H1 (cell line): ENCODE measurements at regions of chr9 and their contacts with region 1.

Region 1: DNA sequence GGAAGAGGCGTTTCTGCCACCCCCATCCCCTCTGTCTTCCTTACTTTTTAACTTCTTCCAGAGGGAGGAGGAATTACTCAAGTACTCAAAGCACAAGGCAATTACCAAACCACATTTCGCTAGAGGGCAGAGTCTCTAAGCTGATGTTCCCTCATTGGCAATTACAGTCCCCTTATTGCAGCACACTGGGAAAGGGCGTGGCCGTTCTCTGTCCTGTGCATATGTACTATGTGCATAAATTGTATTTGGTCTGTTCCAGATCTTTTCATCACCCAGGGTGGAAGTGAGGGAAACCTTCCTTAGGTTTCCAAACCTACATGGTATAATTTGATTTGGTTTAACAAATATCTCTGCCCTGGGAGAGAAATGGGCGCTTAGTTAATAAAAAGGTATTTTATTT is 29.8 kb upstream of the ALDOB start:
- DNase-seq: peak in 1 of 2 experiments; percentile 19
- H3K4me3 ChIP-seq: no peak overlapping the region
- H3K27ac ChIP-seq: no peak overlapping the region
- H3K4me1 ChIP-seq: peaks cover 0 to 10% (median 3%) of the 10 kb centered on the region in 4 experiments; a peak in 5 of 7 replicates
- H3K27me3 ChIP-seq: no peaks in the 10 kb centered on the region
- CTCF ChIP-seq: peak in 2 of 3 experiments; percentile 61 to 69; a peak in 3 of 4 replicates
- EP300 ChIP-seq: no peak
- POLR2A ChIP-seq: no peak
- RAD21 ChIP-seq: peak; percentile 56 to 63

Region 2: DNA sequence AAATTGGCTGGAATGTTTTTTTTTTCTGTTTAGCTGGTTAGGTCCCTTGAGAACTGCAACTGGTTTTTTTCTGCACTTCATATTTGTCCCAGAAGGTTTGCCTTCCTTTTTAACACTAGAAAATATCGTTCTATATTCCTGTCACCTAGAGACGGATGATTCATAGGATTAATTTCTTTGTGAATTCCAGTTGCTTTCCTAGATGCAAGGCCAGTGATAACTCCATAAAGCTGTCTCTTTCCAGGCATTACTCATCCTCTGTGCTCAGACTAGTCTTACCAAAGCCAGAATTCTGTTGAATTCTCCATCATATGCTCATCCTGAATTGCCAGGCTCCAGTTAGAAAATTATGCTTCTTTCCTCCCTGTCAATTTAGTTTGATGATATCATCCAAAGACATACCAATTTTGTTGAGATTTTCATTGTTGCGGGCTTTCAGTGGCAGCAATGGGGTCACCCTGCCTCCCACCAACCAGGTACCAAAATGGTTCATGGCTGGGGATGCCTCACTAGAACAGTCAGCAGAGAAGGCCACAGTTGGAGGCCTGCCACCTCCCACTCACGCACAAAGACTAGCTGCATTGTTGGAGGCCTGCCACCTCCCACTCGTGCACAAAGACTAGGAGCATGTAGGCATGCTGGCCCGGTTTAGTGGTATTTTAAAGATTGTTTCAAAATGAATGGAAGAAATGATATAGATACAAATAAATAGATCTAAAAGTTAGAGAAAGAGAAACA is 89.1 kb before region 1 on chr9:
- CTCF ChIA-PET with region 1: no interaction called
- POLR2A ChIA-PET with region 1: no interaction called
- DNase-seq: no peak
- H3K4me3 ChIP-seq: no peak overlapping the region
- H3K27ac ChIP-seq: no peak overlapping the region
- H3K4me1 ChIP-seq: no peaks in the 10 kb centered on the region; a peak in 1 of 7 replicates
- H3K27me3 ChIP-seq: no peaks in the 10 kb centered on the region
- CTCF ChIP-seq: no peak
- EP300 ChIP-seq: no peak
- POLR2A ChIP-seq: no peak
- RAD21 ChIP-seq: no peak

Region 3: GRCh38 chr9:101477736-101478135 is 12.3 kb after region 1 on chr9:
- CTCF ChIA-PET with region 1: interaction called, 122 read pairs
- POLR2A ChIA-PET with region 1: interaction called, 7 read pairs
- DNase-seq: no peak
- H3K4me3 ChIP-seq: no peak overlapping the region
- H3K27ac ChIP-seq: no peak overlapping the region
- H3K4me1 ChIP-seq: peaks cover 0 to 4% (median 1%) of the 10 kb centered on the region in 4 experiments; a peak in 2 of 7 replicates
- H3K27me3 ChIP-seq: no peaks in the 10 kb centered on the region
- CTCF ChIP-seq: no peak
- EP300 ChIP-seq: no peak
- POLR2A ChIP-seq: no peak
- RAD21 ChIP-seq: no peak

Region 4: GRCh38 chr9:101486693-101487442 is 21.5 kb after region 1 on chr9:
- CTCF ChIA-PET with region 1: interaction called, 78 read pairs
- POLR2A ChIA-PET with region 1: interaction called, 21 read pairs
- DNase-seq: peak; percentile 72 to 87
- H3K4me3 ChIP-seq: peak overlapping the region; percentile 70 to 87 (median 74)
- H3K27ac ChIP-seq: peak overlapping the region; percentile 25; the same call in 1 of the 2 replicates
- H3K4me1 ChIP-seq: peaks cover 5 to 9% (median 7%) of the 10 kb centered on the region in 4 experiments; a peak in 6 of 7 replicates
- H3K27me3 ChIP-seq: peaks cover 0 to 5% (median 2%) of the 10 kb centered on the region in 4 experiments; a peak in 5 of 7 replicates
- CTCF ChIP-seq: peak; percentile 61 to 70 (median 67)
- EP300 ChIP-seq: no peak
- POLR2A ChIP-seq: peak; percentile 17 to 60; a peak in 2 of 3 replicates
- RAD21 ChIP-seq: peak; percentile 67 to 72